ENCODE measurements at regions of chr1 and their contacts with region 1.

Region 1: GRCh38 chr1:93433407-93433961 is 14.4 kb upstream of the FNBP1L start:
- DNase-seq: no peak
- ATAC-seq: no peak
- H3K4me3 ChIP-seq: no peak overlapping the region
- H3K4me3 Mint-ChIP-seq: no peak overlapping the region
- H3K27ac ChIP-seq: no peak overlapping the region
- H3K27ac Mint-ChIP-seq: no peak overlapping the region
- H3K4me1 ChIP-seq: no peaks in the 10 kb centered on the region
- H3K4me1 Mint-ChIP-seq: peaks cover 0 to 3% (median 2%) of the 10 kb centered on the region in 3 donors
- H3K27me3 ChIP-seq: peaks cover 0 to 18% of the 10 kb centered on the region in 2 experiments
- H3K27me3 Mint-ChIP-seq: peaks cover 4 to 8% of the 10 kb centered on the region in 2 donors

Region 2: GRCh38 chr1:93411000-93411399 is 22.5 kb before region 1 on chr1:
- CTCF ChIA-PET with region 1: interaction called in 1 of 2 experiments, 3 read pairs
- POLR2A ChIA-PET with region 1: interaction called in 1 of 2 experiments, 10 read pairs
- DNase-seq: no peak
- ATAC-seq: no peak
- H3K4me3 ChIP-seq: no peak overlapping the region
- H3K4me3 Mint-ChIP-seq: no peak overlapping the region
- H3K27ac ChIP-seq: no peak overlapping the region
- H3K27ac Mint-ChIP-seq: no peak overlapping the region
- H3K4me1 ChIP-seq: no peaks in the 10 kb centered on the region
- H3K4me1 Mint-ChIP-seq: peaks cover 0 to 3% (median 0%) of the 10 kb centered on the region in 3 donors
- H3K27me3 ChIP-seq: peaks cover 0 to 9% of the 10 kb centered on the region in 2 experiments
- H3K27me3 Mint-ChIP-seq: peaks cover 11% of the 10 kb centered on the region in 2 donors